ENCODE measurements at regions of chr14 and their contacts with region 1.

Region 1: GRCh38 chr14:101947906-101948665 is 16.3 kb upstream of the DYNC1H1 start:
- DNase-seq: peak; percentile 100
- ATAC-seq: peak; percentile 98
- H3K4me3 Mint-ChIP-seq: peak overlapping the region; percentile 89
- H3K27ac Mint-ChIP-seq: peak overlapping the region; percentile 93
- H3K4me1 Mint-ChIP-seq: peaks cover 12% of the 10 kb centered on the region
- H3K27me3 Mint-ChIP-seq: peaks cover 17% of the 10 kb centered on the region

Region 2: DNA sequence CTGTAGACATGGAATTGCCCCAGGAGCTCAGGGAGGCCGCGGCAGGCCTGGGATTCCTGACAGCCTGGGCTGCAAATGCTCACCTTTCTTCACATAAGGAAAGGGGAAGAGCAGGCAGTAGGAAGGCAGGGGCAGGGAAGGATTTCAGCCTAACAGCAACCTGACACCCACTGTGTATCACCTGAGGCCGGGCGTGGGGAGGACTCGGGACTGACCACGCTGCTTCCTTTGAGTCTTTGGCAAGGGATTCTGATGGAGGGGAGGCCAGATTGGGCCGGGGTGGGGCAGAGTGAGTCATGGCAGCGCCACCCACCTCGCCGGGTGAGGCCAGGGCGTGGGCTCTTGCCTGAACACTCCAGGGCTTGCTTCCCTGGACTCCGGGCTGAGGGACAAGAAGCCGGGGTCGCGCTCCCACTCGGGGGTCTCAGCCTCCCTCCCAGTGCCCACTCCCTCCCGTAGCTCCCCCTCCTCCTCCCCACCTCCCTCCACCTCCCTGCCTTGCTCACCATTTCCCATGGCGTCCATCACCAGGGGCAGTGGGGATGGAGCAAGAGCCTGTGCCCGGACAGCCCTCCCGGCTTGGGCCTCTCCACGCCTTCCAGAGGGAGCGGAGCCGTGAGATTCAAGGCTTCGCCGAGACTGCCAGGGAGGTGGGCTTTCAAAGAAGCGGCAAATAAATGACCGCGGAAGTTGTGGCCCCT is 796.7 kb before region 1 on chr14:
- CTCF ChIA-PET with region 1: no interaction called
- POLR2A ChIA-PET with region 1: no interaction called
- intact Hi-C with region 1: no loop called
- DNase-seq: no peak
- ATAC-seq: no peak
- H3K4me3 Mint-ChIP-seq: no peak overlapping the region
- H3K27ac Mint-ChIP-seq: no peak overlapping the region
- H3K4me1 Mint-ChIP-seq: peaks cover 2% of the 10 kb centered on the region
- H3K27me3 Mint-ChIP-seq: peaks cover 11% of the 10 kb centered on the region

Region 3: GRCh38 chr14:101707068-101707842 is 240.8 kb before region 1 on chr14:
- CTCF ChIA-PET with region 1: interaction called, 6 read pairs
- POLR2A ChIA-PET with region 1: interaction called, 3 read pairs
- intact Hi-C with region 1: loop called (anchors 1 to 2 kb)
- DNase-seq: peak; percentile 74
- ATAC-seq: peak; percentile 79
- H3K4me3 Mint-ChIP-seq: peak overlapping the region; percentile 33
- H3K27ac Mint-ChIP-seq: peak overlapping the region; percentile 81
- H3K4me1 Mint-ChIP-seq: peaks cover 29% of the 10 kb centered on the region
- H3K27me3 Mint-ChIP-seq: no peaks in the 10 kb centered on the region

Region 4: DNA sequence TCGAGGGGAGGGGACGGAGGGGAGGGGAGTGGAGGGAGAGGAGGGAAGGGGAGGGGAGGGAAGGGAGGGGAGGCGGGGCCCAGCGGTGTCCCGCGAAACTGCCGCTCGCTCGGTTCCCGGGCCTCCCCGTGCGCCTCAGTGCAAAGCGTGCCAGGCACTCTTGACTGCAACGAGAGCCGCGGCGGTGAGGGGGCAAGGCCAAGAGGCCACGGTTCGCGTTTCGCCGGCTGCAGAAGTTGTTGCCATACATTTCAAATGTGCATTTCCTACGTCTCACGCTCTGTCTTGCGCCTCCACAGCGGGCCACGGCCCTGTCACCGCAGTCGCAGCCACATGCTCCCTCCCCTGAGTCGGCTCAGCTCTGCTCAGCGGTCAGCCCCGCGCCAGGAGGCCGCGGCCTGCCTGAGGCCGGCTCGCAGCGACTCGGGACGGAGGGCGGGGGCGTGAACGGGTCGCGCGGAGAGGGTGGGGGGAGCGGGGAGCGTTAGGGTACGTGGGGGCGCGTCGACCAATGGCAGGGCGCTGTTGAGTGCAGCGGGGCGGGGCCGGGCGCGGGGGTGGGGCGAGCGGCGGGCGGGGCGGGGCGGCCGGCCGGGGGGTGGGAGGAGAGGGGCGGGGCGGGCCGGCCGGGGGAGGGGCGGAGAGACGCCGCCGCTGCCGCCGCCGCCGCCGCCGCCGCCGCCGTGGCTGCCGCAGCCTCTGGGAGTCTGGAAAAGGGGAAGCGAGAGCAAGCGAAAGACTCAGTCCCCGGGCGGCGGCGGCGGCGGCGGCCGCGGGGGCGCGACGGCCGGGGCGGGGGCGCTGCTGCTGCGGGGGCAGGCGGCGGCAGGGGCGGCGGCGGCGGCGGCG is 186.8 kb before region 1 on chr14 and contains the start of gene PPP2R5C:
- CTCF ChIA-PET with region 1: no interaction called
- POLR2A ChIA-PET with region 1: interaction called, 4 read pairs
- intact Hi-C with region 1: loop called (anchors 1 kb)
- DNase-seq: peak; percentile 94
- ATAC-seq: peak; percentile 65
- H3K4me3 Mint-ChIP-seq: peak within 1 kb of the TSS; percentile 85
- H3K27ac Mint-ChIP-seq: peak within 1 kb of the TSS; percentile 78
- H3K4me1 Mint-ChIP-seq: peaks cover 43% of the 10 kb centered on the region
- H3K27me3 Mint-ChIP-seq: no peaks in the 10 kb centered on the region
- total RNA-seq, gene PPP2R5C: 232 to 281 TPM

Region 5: GRCh38 chr14:101876555-101876938 is 71.5 kb before region 1 on chr14:
- CTCF ChIA-PET with region 1: interaction called, 5 read pairs
- POLR2A ChIA-PET with region 1: interaction called, 5 read pairs
- intact Hi-C with region 1: loop called in 1 of 2 experiments (anchors 1 kb)
- DNase-seq: peak; percentile 86
- ATAC-seq: peak; percentile 62
- H3K4me3 Mint-ChIP-seq: peak overlapping the region; percentile 66
- H3K27ac Mint-ChIP-seq: peak overlapping the region; percentile 94
- H3K4me1 Mint-ChIP-seq: peaks cover 91% of the 10 kb centered on the region
- H3K27me3 Mint-ChIP-seq: no peaks in the 10 kb centered on the region

Region 6: DNA sequence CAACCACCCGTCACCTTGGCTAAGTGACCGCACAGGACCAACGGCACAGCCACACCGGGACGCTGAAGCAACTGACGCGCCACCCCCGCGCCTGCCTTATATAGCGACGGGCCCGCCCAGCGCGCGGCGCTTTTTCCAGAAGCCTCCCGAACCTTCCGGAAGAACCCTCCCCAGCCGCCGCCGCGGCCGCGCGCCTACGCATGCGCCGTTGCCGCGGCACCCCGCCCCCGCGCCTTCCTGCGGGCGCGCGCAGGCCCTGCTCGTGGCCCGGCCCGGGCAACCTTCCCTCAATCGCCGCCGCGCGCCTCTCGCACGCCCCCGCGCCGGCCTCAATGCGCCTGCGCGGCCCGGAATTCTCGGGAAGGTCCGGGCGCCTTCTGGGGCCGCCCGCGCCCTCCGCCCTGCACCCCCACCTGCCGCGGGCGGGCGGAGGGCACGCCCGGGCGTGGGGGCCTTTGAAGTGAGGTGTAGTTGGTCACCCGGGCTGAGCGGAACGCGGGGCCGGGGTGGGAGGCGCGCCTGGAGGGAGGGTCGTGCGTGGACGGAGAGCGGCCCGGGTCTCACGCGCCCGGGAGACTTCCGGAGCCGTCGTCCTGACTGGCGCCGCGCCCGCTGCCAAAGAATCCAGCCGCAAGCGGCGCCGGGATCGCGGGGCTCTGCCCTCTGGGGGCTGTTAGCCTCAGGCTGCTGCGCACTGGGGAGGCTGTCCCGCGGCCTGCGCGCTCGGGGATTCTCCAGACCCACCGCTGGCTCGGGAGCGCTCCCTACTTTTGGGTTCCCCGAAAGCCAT is 139.1 kb after region 1 on chr14 and contains the start of gene HSP90AA1:
- CTCF ChIA-PET with region 1: no interaction called
- POLR2A ChIA-PET with region 1: no interaction called
- intact Hi-C with region 1: loop called (anchors 1 to 5 kb)
- DNase-seq: peak; percentile 97
- ATAC-seq: peak; percentile 68
- H3K4me3 Mint-ChIP-seq: peak within 1 kb of the TSS; percentile 77
- H3K27ac Mint-ChIP-seq: peak within 1 kb of the TSS; percentile 92
- H3K4me1 Mint-ChIP-seq: peaks cover 46% of the 10 kb centered on the region
- H3K27me3 Mint-ChIP-seq: no peaks in the 10 kb centered on the region
- total RNA-seq, gene HSP90AA1: 1,344 to 1,372 TPM

Region 7: DNA sequence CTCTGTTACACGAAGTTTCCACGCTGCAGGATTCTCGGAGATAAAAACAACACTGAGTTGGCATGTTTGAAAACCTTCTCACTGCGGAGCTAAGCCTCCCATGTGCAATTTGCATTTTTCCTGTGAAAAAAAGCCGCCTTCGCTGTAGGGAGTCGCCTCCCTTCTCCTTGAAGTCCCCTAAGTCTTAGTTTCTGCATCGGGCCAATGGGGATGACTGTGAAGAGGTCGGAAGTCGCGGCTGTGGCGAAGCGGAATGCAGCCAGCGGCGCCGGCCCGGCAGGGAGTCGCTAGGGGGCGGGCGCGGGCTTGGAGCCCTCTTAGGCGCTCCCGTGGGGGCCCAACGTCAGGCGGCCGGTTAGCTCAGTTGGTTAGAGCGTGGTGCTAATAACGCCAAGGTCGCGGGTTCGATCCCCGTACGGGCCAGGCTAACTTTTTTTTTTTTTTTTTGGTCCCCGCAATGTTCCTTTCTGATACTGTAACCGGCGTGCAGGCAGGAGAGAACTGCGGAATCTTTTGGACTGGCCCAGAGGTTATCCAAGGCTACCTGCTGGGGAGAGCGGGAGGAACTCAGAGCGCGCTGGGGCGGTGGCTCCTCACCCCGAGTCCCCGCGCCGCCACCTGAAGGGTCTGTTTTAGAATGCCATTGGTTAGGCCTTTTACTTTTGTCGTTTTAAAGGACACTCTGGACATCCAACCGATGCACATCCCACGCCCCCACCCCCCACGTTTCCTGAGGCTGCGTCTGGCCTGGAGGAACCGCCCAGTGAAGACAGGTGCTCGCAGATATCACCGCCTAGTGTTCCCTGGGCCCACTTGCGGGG is 368.9 kb after region 1 on chr14:
- CTCF ChIA-PET with region 1: interaction called, 4 read pairs
- POLR2A ChIA-PET with region 1: no interaction called
- intact Hi-C with region 1: loop called (anchors 1 to 5 kb)
- DNase-seq: peak; percentile 97
- ATAC-seq: peak; percentile 69
- H3K4me3 Mint-ChIP-seq: peak overlapping the region; percentile 92
- H3K27ac Mint-ChIP-seq: peak overlapping the region; percentile 98
- H3K4me1 Mint-ChIP-seq: peaks cover 61% of the 10 kb centered on the region
- H3K27me3 Mint-ChIP-seq: no peaks in the 10 kb centered on the region

Region 8: DNA sequence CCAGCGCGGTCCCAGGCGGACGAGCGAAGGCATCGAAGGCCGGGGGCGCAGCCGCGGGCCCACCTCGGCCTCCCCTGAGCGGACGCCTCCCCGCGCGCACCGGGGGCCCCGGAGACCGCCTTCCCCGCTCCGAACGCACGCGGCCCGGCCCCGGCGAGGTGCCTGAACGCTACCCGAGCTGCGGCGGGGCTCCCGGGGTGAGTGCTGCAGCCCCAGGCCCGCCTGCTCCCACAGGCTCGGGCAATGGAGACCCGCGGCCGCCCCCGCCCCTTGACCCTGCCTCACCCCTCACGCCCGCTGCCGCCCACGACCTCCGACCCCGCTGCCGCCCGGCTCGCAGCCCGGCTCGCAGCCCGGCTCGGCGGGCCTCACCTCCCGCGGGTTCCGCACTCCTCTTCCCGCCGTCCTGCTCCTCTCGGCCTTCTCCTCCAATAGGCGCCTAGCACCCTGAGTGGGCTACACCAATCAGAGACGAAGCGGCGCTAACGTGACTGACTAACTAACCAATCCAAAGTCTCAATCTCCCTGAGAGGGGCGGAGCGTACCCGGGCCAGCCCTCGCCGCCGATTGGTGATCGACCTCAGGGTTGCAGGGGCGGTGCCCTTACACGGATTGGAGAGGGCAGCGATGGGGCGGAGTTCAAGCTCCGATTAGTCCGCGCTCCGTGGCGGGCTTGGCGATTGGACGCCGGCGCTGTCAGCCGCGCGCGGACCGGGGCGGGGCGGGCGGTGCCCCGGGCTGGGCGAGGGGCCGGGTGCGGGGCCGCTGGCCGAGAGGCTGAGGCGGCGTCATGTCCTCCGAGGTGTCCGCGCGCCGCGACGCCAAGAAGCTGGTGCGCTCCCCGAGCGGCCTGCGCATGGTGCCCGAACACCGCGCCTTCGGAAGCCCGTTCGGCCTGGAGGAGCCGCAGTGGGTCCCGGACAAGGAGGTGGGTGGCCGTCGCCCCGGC is 1767.2 kb after region 1 on chr14 and contains the starts of genes XRCC3 and ZFYVE21:
- CTCF ChIA-PET with region 1: no interaction called
- POLR2A ChIA-PET with region 1: no interaction called
- intact Hi-C with region 1: loop called in 1 of 2 experiments (anchors 5 kb)
- DNase-seq: peak; percentile 100
- ATAC-seq: peak; percentile 96
- H3K4me3 Mint-ChIP-seq: peak within 1 kb of the TSS; percentile 81
- H3K27ac Mint-ChIP-seq: peak within 1 kb of the TSS; percentile 60
- H3K4me1 Mint-ChIP-seq: peaks cover 49% of the 10 kb centered on the region
- H3K27me3 Mint-ChIP-seq: no peaks in the 10 kb centered on the region
- total RNA-seq, gene XRCC3: 43.7 to 46.9 TPM
- total RNA-seq, gene ZFYVE21: 10.1 to 12.7 TPM

Measured in activated CD4-positive, alpha-beta T cell treated with anti-CD3 and anti-CD28 coated beads for 36 hours (primary cell).